ENCODE measurements at regions of chr2 and their contacts with region 1.

Region 1: DNA sequence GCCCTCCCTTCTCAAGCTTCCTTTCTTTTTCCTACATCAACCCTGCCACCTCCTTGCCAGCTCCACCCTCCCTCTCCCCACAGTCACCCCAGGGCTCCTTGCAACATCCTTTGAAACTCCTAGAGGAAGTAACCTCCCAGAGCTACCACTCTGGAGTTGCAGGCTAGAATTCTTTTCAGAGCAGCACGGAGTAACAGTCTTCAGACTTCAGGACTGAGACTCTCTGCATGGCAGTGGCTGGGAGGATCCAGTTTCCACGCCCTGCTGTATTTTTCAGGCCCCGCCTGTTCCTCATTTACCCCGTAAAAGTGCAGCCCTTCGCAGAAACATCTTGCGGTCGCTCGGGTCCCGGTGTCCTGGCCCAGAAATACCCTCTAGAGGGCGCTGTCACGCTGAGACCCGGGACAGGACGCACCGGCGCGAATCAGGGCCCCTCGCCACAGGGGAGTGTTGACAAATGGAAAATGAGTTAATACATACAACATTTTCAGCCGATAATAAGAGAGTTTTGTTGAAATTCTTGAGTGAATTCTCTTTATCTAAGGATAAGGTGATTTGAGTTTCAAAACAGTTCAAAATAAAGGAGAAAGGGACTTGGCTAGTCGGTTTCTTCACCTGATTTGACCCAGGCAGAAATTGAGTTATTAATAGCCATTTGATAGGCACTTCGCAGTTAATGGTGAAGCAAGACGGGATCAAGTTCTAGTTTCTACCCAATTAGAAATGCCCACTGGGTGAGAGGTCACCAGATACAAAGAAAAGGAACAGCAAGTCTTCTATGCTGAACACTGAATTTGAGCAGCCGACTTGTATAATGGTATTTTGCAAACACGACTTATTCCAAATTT is 18.5 kb upstream of the NTSR2 start:
- DNase-seq: peak; percentile 56 to 68
- H3K4me3 ChIP-seq: no peak overlapping the region
- H3K4me3 Mint-ChIP-seq: peak overlapping the region; percentile 32
- H3K27ac Mint-ChIP-seq: no peak overlapping the region
- H3K4me1 ChIP-seq: 0 out of 2 replicates have a peak, but pooled peaks cover 4% of the 10 kb centered on the region
- H3K4me1 Mint-ChIP-seq: no peaks in the 10 kb centered on the region
- H3K27me3 ChIP-seq: no peaks in the 10 kb centered on the region
- H3K27me3 Mint-ChIP-seq: peaks cover 6% of the 10 kb centered on the region
- CTCF ChIP-seq: peak; percentile 62 to 74

Region 2: GRCh38 chr2:11571131-11571530 is 117.3 kb before region 1 on chr2:
- CTCF ChIA-PET with region 1: no interaction called
- POLR2A ChIA-PET with region 1: no interaction called
- intact Hi-C with region 1: no loop called
- DNase-seq: peak in 1 of 2 experiments; percentile 9
- H3K4me3 ChIP-seq: no peak overlapping the region
- H3K4me3 Mint-ChIP-seq: no peak overlapping the region
- H3K27ac Mint-ChIP-seq: no peak overlapping the region
- H3K4me1 ChIP-seq: no peaks in the 10 kb centered on the region
- H3K4me1 Mint-ChIP-seq: no peaks in the 10 kb centered on the region
- H3K27me3 ChIP-seq: no peaks in the 10 kb centered on the region
- H3K27me3 Mint-ChIP-seq: peaks cover 2% of the 10 kb centered on the region
- CTCF ChIP-seq: no peak

Region 3: DNA sequence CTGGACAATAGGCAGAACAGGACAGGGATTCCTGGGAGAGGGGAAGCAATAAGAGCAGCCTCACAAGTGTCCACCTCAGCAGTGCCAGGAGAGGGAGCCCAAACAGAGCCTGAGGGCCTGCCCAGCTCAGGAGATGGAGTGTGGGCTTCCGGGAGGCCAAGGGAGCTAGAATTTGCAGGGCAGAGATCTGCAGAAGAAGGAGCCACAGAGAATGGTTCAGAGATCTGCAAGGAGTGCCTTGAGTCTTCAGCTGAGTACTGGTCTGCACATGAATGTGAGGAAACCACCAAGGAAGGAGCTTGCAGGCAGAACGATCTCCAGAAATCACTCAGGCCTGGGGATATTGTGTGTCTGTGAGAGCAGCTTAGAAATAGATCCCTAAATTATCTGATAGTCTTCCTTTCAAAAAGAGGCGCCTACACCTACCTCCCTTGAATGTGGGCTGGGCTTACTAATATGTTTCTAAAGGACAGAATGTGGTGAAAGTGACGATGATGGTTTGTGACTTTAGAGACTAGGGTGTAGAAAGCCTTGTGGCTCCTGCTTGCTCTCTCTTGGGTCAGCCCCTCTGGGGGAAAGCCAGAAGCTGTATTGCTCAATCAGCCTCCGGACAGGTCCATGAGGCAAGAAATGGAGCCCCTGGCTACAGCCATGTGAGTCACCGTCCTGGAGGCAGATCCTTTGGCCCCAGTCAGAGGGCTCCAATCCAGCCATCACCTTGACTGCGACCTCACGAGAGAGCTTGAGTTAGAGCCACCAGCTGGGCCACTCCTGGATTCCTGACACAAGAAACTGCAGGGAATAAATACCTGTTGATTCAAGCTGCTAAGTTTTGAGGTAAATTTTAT is 50.4 kb after region 1 on chr2:
- CTCF ChIA-PET with region 1: interaction called, 10 read pairs
- POLR2A ChIA-PET with region 1: no interaction called
- intact Hi-C with region 1: loop called (anchors 1 kb)
- DNase-seq: peak; percentile 67 to 75
- H3K4me3 ChIP-seq: no peak overlapping the region
- H3K4me3 Mint-ChIP-seq: no peak overlapping the region
- H3K27ac Mint-ChIP-seq: peak overlapping the region; percentile 36
- H3K4me1 ChIP-seq: peaks cover 40% of the 10 kb centered on the region
- H3K4me1 Mint-ChIP-seq: peaks cover 30% of the 10 kb centered on the region
- H3K27me3 ChIP-seq: no peaks in the 10 kb centered on the region; the same call in 1 of the 2 replicates
- H3K27me3 Mint-ChIP-seq: no peaks in the 10 kb centered on the region
- CTCF ChIP-seq: peak; percentile 37 to 75

Region 4: DNA sequence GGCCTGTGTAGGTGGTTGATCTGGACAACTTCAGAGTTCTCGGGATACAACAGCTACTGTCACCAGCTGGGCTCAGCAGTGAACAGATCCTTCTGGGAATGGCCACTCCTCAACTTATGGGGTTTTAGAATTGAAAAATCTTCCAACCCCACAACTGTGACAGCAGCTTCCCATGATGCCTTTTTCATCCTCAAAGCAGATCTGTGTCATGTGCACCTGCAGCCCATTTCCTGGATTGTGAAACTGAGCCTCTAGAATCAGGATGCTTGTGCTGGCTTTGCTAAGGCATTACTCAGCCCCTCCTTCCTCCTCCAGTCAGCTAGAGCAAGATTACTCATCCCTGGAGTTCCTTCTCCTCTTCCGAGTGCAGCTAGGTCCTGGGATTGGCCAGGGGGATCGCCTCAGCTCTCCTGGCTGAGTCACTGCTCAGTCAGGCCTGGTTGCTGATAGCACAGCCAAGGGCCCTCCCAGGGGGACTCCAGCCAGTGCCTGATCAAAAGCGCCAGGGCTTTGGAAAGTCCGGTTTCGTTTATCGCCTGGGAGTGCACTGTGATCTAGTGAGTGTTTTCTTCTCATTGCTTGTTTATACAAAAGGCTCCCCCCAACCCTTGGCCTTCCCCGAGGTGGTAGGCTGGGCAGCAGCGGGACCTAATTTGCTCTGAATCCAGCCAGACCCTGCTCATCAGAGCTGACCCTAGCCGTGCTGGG is 55.6 kb after region 1 on chr2:
- CTCF ChIA-PET with region 1: interaction called, 10 read pairs
- POLR2A ChIA-PET with region 1: no interaction called
- intact Hi-C with region 1: loop called (anchors 1 kb)
- DNase-seq: peak; percentile 94 to 97
- H3K4me3 ChIP-seq: no peak overlapping the region
- H3K4me3 Mint-ChIP-seq: peak overlapping the region; percentile 17
- H3K27ac Mint-ChIP-seq: peak overlapping the region; percentile 69
- H3K4me1 ChIP-seq: peaks cover 33% of the 10 kb centered on the region
- H3K4me1 Mint-ChIP-seq: peaks cover 36% of the 10 kb centered on the region
- H3K27me3 ChIP-seq: no peaks in the 10 kb centered on the region
- H3K27me3 Mint-ChIP-seq: no peaks in the 10 kb centered on the region
- CTCF ChIP-seq: no peak

Region 5: DNA sequence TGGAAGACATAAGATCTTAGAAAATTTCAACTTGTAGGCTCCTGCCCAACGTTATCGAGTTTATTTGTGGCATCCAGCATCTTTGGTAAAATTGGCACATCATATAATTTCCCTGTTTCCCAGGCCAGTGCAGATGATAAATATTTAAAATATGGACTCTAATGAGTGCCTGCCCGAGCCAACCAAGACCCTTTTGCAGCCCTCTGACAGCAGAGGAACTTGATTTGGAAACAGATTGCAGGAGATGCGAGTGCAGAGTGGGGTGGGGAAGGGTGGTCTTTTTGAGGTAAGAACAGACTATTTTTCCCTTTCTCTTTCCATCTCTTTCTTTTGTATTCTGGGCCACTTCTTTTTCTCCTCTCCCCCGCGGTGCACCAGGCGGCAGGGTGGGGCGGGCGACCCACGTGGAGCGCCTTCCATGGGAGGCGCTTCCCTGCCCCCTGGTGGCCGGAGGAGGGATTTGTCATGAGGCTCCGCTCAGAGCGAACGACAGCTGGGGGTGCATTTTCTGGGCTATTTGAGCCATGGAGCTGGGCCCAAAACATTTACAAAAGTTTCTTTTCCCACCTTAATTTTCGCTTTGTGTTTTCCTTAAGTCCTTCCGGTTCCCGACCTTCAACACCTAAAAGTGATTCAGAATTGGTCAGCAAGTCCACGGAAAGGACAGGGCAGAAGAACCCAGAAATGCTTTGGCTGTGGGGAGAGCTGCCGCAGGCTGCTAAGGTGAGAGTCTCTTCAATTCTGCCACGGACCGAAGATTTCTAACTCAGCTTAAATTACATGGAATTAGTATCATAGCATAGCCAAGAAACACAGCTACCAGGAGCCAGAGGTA is 90.7 kb after region 1 on chr2:
- CTCF ChIA-PET with region 1: interaction called, 13 read pairs
- POLR2A ChIA-PET with region 1: no interaction called
- intact Hi-C with region 1: loop called (anchors 1 kb)
- DNase-seq: peak; percentile 72 to 86
- H3K4me3 ChIP-seq: no peak overlapping the region
- H3K4me3 Mint-ChIP-seq: peak overlapping the region; percentile 54
- H3K27ac Mint-ChIP-seq: no peak overlapping the region
- H3K4me1 ChIP-seq: peaks cover 15% of the 10 kb centered on the region
- H3K4me1 Mint-ChIP-seq: peaks cover 13% of the 10 kb centered on the region
- H3K27me3 ChIP-seq: no peaks in the 10 kb centered on the region
- H3K27me3 Mint-ChIP-seq: no peaks in the 10 kb centered on the region
- CTCF ChIP-seq: peak; percentile 97 to 99